IMR-90 (cell line): ENCODE measurements at regions of chr5 and their contacts with region 1.

Region 1: GRCh38 chr5:179345433-179346321 is at the start of gene ADAMTS2:
- DNase-seq: peak; percentile 56
- ATAC-seq: peak; percentile 61
- H3K4me3 ChIP-seq: peak within 1 kb of the TSS; percentile 93
- H3K27ac ChIP-seq: peak within 1 kb of the TSS; percentile 74
- H3K4me1 ChIP-seq: peaks cover 15% of the 10 kb centered on the region
- H3K27me3 ChIP-seq: no peaks in the 10 kb centered on the region; the same call in 1 of the 2 replicates
- CTCF ChIP-seq: 0 out of 2 replicates have a peak, but pooled peaks have one; percentile 19
- POLR2A ChIP-seq: no peak
- RAD21 ChIP-seq: peak; percentile 34; the same call in 1 of the 2 replicates
- total RNA-seq, gene ADAMTS2: 18.3 and 19.0 TPM in 2 replicates

Region 2: GRCh38 chr5:179212870-179213269 is 132.8 kb before region 1 on chr5:
- CTCF ChIA-PET with region 1: interaction called, 4 read pairs
- POLR2A ChIA-PET with region 1: no interaction called
- dilution Hi-C with region 1: no loop called
- in situ Hi-C with region 1: no loop called
- intact Hi-C with region 1: loop called (anchors 5 kb)
- DNase-seq: no peak
- ATAC-seq: peak; percentile 63
- H3K4me3 ChIP-seq: no peak overlapping the region
- H3K27ac ChIP-seq: no peak overlapping the region
- H3K4me1 ChIP-seq: peaks cover 17% of the 10 kb centered on the region
- H3K27me3 ChIP-seq: no peaks in the 10 kb centered on the region
- CTCF ChIP-seq: peak; percentile 52
- POLR2A ChIP-seq: no peak
- RAD21 ChIP-seq: peak; percentile 65

Region 3: DNA sequence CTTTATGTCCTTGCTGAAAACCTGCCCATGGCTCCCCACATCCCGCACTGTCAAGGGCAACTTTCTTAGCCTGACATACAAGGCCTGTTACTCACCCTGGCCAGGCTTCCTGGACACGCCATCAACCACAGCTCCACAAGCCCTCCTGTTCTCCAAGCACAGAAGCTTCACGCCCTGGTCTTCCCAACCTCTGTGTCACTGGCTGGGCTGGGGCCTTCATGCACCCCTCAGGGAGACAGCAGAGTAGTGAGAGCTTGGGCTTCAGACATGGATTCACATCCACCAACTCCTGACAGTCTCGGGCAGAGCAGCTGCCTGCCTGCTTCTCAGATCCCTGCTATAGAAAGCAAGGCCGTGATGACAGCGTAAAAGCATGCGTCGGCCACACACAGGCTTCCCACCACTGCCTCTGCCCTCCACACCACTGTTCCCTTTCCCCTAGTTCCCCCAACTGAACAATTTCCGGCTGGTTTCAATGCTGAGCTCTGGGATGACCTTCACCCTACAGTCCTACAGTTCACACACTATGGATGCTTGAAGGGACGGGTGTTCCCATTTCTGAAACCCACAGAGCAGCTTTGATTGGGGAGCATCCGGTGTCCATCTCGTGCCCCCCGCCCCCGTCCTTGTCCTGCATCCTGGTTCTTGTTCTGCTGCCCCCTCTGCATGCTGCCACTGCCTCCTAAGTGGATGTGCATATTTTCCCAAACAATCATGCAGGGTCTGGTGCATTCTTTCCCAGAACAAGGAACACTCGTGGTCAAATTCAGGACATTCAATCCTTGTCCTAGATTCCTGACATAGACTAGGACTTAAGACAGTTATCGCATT is 33.0 kb after region 1 on chr5:
- CTCF ChIA-PET with region 1: no interaction called
- POLR2A ChIA-PET with region 1: no interaction called
- dilution Hi-C with region 1: no loop called
- in situ Hi-C with region 1: no loop called
- intact Hi-C with region 1: loop called (anchors 1 kb)
- DNase-seq: peak; percentile 78
- ATAC-seq: peak; percentile 85
- H3K4me3 ChIP-seq: no peak overlapping the region
- H3K27ac ChIP-seq: peak overlapping the region; percentile 87
- H3K4me1 ChIP-seq: peaks cover 27% of the 10 kb centered on the region
- H3K27me3 ChIP-seq: no peaks in the 10 kb centered on the region
- CTCF ChIP-seq: no peak
- POLR2A ChIP-seq: no peak
- RAD21 ChIP-seq: no peak

Region 4: DNA sequence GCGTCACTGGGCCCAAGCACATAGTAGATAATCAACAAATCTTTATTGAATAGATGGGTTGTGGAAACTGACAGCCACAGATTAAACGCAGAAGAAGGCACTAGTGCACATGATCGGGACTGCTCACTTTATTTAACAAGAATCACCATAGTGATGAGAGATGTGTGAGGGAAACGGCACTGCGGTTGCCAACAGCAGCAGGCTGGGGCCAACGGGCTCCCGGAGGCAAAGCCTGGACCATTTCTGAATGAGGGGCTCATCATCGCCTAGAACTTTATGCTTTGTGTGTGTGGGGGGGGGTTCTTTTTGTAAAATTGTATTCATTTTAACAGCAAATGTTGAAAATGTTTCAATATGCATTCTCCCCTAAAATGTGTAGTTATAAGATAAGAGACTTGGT is 142.8 kb after region 1 on chr5:
- CTCF ChIA-PET with region 1: no interaction called
- POLR2A ChIA-PET with region 1: no interaction called
- dilution Hi-C with region 1: no loop called
- in situ Hi-C with region 1: loop called (anchors 10 kb)
- intact Hi-C with region 1: loop called (anchors 2 kb)
- DNase-seq: no peak
- ATAC-seq: no peak; the same call in 1 of the 2 replicates
- H3K4me3 ChIP-seq: no peak overlapping the region
- H3K27ac ChIP-seq: no peak overlapping the region; the same call in 1 of the 2 replicates
- H3K4me1 ChIP-seq: peaks cover 18% of the 10 kb centered on the region; the same call in 1 of the 2 replicates
- H3K27me3 ChIP-seq: peaks cover 2% of the 10 kb centered on the region; the same call in 1 of the 2 replicates
- CTCF ChIP-seq: no peak
- POLR2A ChIP-seq: no peak
- RAD21 ChIP-seq: no peak